ENCODE measurements at regions of chr6 and their contacts with region 1.

Region 1: DNA sequence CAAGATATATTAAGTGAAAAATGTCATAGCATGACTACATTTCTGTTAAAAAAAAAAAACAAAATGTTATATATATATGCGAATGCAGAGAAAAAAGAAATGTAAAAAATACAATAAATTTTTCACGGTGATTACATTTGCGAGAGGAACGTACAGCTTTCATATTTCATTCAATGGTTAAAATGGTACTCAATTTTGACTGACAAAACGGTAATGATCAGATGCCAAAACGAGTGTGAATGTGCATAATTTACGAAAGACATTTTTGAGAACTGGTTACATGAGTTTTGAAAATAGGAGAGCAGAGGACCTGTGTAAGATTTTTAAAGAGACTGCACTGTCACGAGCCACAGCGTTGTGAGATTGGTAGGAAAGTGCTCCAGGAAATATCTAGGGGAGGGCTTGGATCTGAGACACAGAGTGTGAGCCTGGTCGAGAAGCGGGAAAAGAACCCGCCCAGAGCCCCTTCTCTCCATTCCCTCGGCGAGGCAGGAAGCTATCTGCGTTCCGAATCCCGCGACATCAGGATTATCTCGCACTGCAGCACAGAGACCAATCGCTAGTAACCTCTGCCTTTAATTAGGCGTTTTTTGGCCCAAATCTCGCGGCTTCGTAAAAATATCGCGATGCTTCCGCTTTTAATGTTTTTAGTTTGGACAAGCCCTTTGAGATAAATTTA is 28.5 kb downstream of the TRIM27 start:
- DNase-seq: peak; percentile 97
- H3K4me3 ChIP-seq: peak overlapping the region; percentile 58 to 76 (median 70)
- H3K27ac ChIP-seq: peak overlapping the region; percentile 96 to 99 (median 97)
- H3K4me1 ChIP-seq: peaks cover 0 to 16% (median 7%) of the 10 kb centered on the region in 4 donors
- H3K27me3 ChIP-seq: no peaks in the 10 kb centered on the region
- CTCF ChIP-seq: no peak
- EP300 ChIP-seq: no peak
- POLR2A ChIP-seq: peak; percentile 38 to 64

Region 2: GRCh38 chr6:28863604-28864320 is 31.5 kb before region 1 on chr6:
- intact Hi-C with region 1: loop called (anchors 1 kb)
- DNase-seq: peak; percentile 86
- H3K4me3 ChIP-seq: peak overlapping the region; percentile 62 to 73 (median 67)
- H3K27ac ChIP-seq: peak overlapping the region; percentile 71 to 81 (median 79)
- H3K4me1 ChIP-seq: peaks cover 0 to 21% (median 10%) of the 10 kb centered on the region in 4 donors
- H3K27me3 ChIP-seq: no peaks in the 10 kb centered on the region
- CTCF ChIP-seq: no peak
- EP300 ChIP-seq: no peak
- POLR2A ChIP-seq: no peak

Region 3: DNA sequence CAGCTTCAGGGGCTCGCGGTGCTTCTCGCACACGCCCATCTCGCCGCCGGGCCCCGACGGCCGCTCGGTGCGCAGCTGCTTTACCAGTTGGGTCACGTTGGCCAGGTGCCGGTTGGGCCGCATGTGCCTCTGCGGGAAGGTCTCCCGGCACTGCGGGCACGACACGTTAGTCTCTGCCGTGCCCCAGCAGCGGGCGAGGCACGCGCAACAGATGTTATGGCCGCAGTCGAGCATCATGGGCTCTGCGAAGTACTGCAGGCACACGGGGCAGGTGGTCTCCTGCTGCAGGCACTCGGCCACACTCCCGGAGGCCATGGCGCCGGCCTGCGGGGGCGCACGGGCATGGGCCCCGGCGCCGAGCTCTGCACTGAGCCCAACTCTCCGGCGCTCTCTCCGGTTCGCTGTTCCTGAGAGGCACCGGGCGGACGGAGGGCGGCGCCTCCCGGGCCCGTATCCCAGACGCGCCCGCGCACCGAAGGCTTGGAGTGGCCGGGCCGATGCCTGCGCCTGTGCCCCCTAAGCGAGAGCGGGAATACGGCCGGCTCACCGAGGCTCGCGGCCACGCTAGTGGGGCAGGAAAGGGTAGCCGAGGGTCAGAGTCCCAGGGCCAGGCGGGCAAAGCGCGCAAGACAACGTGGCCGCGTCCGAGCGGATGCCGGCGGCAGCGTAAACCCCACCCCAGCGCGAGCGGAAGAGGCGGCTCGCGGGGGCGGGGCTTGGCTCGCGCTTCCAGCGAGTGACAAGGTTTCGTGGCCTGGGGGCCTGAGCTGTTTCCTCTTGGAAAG is 28.2 kb after region 1 on chr6 and contains the start of gene TRIM27:
- intact Hi-C with region 1: loop called (anchors 1 kb)
- DNase-seq: peak; percentile 94
- H3K4me3 ChIP-seq: peak within 1 kb of the TSS; percentile 67 to 83 (median 80)
- H3K27ac ChIP-seq: peak within 1 kb of the TSS; percentile 92 to 97 (median 94)
- H3K4me1 ChIP-seq: peaks cover 0 to 37% (median 19%) of the 10 kb centered on the region in 4 donors
- H3K27me3 ChIP-seq: no peaks in the 10 kb centered on the region
- CTCF ChIP-seq: no peak
- EP300 ChIP-seq: no peak
- POLR2A ChIP-seq: peak; percentile 80 to 81
- total RNA-seq, gene TRIM27: 31.9 to 40.0 (median 36.1) TPM

Region 4: DNA sequence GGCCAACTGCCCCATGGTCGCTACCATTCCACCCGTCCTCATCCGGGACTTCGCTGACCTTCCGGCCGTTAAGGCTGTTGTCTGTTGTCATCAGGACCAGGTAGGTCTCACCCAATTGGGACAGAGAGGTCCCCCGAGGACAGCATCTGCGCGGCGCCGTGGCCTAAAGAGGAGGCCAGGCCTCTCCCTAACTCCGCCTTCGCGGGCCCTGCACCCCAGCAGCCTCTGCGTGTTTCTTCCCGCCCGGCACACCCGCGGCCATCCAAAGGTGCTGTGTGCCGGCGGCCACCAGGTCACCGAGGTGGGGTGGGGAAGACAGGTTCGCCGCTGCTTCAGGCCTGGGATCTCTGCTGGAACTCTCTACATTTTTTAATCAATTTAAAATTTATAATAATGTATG is 140.7 kb after region 1 on chr6:
- intact Hi-C with region 1: no loop called
- DNase-seq: no peak
- H3K4me3 ChIP-seq: no peak overlapping the region
- H3K27ac ChIP-seq: no peak overlapping the region
- H3K4me1 ChIP-seq: no peaks in the 10 kb centered on the region
- H3K27me3 ChIP-seq: no peaks in the 10 kb centered on the region
- CTCF ChIP-seq: no peak
- EP300 ChIP-seq: no peak
- POLR2A ChIP-seq: no peak